Motor neuron (in vitro differentiated cells): ENCODE measurements at regions of chr11 and their contacts with region 1.

Region 1: GRCh38 chr11:11787305-11788062 is 54.3 kb upstream of the USP47 start:
- ATAC-seq: peak; percentile 88 to 99 (median 98)
- H3K4me3 ChIP-seq: no peak overlapping the region
- H3K27ac ChIP-seq: no peak overlapping the region
- H3K4me1 ChIP-seq: peaks cover 0 to 2% of the 10 kb centered on the region in 2 donors

Region 2: DNA sequence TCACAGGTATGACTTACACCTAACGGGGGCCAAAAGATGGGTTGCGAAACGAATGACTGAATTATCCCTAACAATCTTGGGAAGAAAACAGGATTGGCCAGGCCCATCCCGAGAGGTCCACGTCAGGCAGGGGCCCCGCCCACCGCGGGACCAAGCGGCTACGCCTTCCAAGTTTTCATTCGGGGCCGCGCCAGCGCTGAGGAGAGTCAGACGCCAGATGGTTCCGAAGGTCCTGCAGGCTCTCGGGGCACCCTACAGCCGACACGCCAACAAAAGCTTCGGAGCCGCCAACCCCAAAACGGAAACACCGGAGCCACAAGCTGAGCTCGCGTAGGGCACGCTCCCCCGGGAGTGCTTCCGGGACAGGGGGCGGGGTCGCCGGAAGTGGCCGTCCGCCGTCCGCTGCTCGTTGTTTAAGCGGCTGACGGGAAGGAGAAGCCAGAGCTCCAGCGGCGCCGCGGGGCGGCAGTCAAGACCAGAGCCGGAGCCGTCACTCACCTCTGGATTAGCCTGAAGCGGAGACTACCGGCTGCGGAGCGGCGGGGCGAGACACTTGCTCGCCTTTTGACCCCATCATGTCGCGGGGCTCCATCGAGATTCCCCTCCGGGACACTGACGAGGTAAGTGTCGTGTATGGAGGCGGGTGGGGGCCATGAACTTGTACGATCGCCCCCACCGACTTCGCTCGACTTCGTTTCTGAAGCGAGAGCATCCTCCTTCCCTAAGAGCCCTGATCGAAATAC is 1036.5 kb before region 1 on chr11 and contains the start of gene CTR9:
- in situ Hi-C with region 1: loop called in 2 of 9 experiments (anchors 25 kb)
- ATAC-seq: peak; percentile 86 to 95 (median 94)
- H3K4me3 ChIP-seq: peak within 1 kb of the TSS; percentile 52 to 81 (median 61)
- H3K27ac ChIP-seq: peak within 1 kb of the TSS; percentile 94 to 96
- H3K4me1 ChIP-seq: peaks cover 0 to 8% of the 10 kb centered on the region in 2 donors
- total RNA-seq, gene CTR9: 19.8 to 55.0 (median 30.6) TPM

Region 3: DNA sequence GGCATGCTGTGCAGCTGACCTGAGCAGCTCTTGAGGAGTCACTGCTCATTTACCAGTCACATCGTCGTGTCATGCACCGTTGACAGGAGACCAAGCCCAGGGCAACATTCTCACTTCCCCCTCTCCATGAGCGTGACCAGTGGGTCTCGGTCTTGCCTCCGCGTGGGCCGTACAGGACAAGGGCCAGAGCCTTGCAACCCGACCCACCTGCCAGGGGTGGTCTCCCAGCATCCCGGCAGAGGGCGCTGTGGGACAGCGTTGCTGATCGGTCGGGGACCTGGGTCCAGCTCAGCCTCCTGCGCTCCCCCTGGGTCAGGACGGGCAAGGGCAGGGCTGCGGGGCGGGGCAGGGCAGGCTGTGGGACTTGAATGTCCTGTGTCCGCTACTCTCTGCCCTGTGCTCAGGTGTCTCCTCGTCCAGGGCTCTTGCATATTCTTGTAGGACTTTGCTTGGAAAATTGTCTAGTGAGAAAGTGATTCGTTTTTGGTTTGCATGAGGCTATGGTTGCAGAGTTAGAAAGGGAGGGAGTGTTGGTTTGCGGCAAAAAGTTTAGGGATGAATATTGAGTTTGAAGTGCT is 995.0 kb before region 1 on chr11:
- in situ Hi-C with region 1: loop called in 2 of 9 experiments (anchors 25 kb)
- ATAC-seq: peak; percentile 88 to 94 (median 92)
- H3K4me3 ChIP-seq: no peak overlapping the region
- H3K27ac ChIP-seq: no peak overlapping the region
- H3K4me1 ChIP-seq: no peaks in the 10 kb centered on the region

Region 4: DNA sequence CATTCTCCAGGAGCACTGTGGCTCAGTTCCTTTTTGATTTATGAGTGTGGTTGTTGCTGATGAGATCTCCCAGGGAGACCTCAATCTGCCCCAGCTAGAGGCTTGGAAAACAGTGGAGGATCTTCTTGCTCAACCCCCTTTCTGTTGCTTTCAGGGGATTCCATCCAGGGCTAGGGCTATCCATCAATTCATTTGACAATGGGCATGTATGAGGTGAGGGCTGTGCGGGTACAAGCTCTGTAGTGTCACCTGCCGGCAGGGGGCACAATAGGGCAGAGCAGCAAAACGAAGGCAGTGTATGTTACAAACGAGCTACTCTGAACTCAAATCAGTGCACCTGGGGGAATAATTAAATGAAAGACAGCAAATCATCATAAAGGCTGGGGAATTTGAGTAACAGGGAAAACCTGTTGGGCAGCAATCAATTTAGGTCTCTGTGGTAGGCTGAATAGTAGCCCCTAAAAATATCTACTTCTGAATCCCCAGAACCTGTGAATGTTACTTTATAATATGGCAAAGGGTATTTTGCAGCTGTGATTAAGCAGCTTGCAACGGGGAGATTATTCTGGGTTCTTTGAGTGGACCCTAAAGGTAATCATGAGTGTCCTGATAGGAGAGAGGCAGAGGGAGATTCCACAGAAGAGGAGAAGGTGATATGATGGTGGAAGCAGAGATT is 759.3 kb before region 1 on chr11:
- in situ Hi-C with region 1: loop called in 6 of 9 experiments (anchors 10 to 25 kb)
- ATAC-seq: peak; percentile 81 to 97 (median 93)
- H3K4me3 ChIP-seq: no peak overlapping the region
- H3K27ac ChIP-seq: no peak overlapping the region
- H3K4me1 ChIP-seq: peaks cover 6 to 17% of the 10 kb centered on the region in 2 donors

Region 5: DNA sequence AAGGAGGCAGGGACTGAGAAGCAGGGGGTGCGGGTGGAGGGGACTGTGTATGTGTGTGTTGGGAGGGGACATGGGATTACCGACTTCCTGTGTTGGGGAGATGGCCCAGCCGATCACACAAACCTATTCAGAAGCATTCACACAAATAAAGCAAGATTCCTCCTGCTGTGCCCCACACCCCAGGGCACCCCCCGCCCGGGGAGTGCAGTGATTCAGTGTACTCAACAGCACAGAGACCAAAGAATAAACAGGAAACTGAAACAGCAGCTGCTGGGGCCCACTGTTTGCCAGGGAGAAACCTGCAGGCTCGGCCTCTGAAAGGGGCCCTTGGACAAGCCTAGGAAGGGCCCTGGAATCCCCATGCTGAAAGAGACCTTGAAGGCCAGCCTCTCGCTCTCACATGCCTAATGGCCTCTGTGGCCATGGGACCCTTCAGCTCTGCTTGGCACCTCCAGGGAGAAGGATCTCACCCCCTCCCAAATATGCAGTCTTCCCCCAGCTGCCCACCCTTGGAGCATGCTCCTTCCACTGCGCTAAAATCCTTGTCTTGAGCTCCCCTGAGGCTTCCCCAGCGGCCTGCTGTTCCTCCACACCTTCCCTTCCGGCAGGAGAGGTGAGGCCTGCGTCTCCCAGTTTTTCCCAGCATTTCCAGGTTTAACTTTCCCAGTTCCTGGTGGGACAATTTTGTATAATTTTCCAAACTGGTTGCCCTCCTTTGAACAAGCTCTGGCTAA is 507.4 kb before region 1 on chr11:
- in situ Hi-C with region 1: loop called in 1 of 9 experiments (anchors 25 kb)
- ATAC-seq: peak in 7 of 8 experiments; percentile 28 to 95 (median 36)
- H3K4me3 ChIP-seq: no peak overlapping the region
- H3K27ac ChIP-seq: no peak overlapping the region
- H3K4me1 ChIP-seq: peaks cover 0 to 2% of the 10 kb centered on the region in 2 donors